ENCODE measurements at regions of chr12 and their contacts with region 1.

Region 1: DNA sequence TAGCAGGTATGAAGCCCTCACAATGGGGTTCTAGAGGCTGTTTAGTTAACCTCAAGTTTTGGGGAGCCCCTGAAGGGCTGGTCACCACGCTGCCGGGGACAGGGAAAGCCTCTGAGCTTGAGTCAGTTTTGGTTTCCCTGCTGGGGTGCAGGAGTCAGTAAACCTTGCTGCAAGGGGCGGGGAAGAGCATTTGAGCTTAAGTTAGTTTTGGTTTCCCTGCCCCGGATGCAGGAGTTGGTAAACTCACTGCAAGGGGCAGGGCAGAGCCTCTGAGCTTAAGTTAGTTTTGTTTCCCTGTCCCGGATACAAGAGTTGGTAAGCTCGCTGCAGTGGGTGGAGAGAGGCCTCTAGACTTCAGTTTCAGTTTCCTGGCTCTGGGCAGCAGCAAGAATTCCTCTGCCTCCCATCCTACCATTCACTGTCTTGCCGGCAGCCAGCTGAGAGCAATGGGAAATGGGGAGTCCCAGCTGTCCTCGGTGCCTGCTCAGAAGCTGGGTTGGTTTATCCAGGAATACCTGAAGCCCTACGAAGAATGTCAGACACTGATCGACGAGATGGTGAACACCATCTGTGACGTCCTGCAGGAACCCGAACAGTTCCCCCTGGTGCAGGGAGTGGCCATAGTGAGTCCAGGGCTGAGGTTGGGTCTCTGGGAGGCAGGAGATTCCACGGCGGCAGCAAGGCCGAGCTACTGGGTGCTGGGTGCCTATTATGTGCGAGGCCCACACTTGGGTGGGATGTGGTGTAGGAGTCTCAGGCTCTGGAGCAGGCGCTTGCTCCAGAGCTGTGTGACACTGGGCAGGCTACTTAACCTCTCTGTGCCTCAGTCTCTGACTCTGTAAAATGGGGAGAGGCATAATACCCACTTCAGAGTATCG is at the start of gene OAS2:
- DNase-seq: peak; percentile 93
- H3K4me3 ChIP-seq: peak within 1 kb of the TSS; percentile 81
- H3K27ac ChIP-seq: peak within 1 kb of the TSS; percentile 90
- H3K4me1 ChIP-seq: peaks cover 41% of the 10 kb centered on the region
- CTCF ChIP-seq: no peak
- total RNA-seq, gene OAS2: 22.7 and 33.2 TPM in 2 replicates

Region 2: DNA sequence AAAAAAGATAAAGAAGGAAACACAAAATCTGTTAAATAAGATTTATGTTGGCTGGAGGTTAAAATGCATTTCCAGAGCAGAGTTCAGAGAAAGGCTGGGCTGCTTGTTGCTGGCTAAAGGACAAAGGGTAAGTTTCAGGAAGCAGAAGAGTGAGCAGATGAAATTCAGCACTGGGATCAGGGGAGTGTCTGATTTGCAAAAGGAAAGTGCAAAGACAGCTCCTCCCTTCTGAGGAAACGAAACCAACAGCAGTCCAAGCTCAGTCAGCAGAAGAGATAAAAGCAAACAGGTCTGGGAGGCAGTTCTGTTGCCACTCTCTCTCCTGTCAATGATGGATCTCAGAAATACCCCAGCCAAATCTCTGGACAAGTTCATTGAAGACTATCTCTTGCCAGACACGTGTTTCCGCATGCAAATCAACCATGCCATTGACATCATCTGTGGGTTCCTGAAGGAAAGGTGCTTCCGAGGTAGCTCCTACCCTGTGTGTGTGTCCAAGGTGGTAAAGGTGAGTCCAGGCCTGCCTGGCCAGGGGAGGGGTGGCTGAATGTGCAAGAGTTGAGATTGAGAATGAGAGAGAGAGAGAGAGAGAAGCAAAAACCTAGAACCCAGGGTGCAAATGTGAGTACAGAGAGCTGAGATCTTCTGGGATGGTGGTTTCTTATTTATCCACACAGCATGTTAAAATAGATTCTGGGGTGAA is 71.5 kb before region 1 on chr12 and contains the start of gene OAS1:
- CTCF ChIA-PET with region 1: interaction called, 9 read pairs
- POLR2A ChIA-PET with region 1: interaction called, 35 read pairs
- intact Hi-C with region 1: loop called (anchors 1 kb)
- DNase-seq: peak; percentile 80
- H3K4me3 ChIP-seq: peak within 1 kb of the TSS; percentile 71
- H3K27ac ChIP-seq: peak within 1 kb of the TSS; percentile 85
- H3K4me1 ChIP-seq: peaks cover 66% of the 10 kb centered on the region
- CTCF ChIP-seq: no peak
- total RNA-seq, gene OAS1: 40.3 and 49.6 TPM in 2 replicates

Region 3: DNA sequence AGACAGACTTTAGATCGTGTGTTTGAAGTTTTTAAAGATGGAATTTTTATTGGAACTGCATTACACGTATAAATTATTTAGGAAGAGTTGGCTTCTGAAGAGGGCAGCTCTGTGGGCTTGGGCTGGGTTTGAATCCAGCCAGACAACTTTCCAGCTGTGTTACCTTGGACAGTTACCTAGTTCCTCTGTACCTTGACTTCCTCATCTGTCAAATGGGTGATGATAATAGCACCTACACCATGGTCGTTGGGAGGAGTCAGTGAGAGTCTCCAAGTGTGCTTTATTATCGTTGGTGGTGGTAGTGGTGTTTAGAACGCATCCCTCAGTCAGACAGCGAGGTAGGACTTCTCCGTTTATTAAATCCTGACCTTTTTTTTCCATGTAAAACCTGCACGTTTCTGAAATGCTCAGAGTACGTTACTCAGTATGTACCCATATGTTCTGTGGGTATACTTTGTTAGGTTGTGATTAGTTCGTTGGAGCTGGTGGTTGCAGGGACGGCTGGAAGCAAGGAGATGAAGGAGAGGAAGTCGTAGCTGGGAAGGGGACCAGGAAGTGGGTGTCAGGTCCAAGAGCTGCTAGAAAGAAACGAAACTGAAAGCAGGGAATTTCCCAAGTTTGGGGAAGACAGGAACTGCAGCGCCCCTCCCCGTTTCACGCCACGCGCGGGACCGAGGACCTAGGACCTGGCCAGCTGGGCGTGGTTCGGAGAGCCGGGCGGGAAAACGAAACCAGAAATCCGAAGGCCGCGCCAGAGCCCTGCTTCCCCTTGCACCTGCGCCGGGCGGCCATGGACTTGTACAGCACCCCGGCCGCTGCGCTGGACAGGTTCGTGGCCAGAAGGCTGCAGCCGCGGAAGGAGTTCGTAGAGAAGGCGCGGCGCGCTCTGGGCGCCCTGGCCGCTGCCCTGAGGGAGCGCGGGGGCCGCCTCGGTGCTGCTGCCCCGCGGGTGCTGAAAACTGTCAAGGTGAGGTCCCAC is 40.4 kb before region 1 on chr12 and contains the start of gene OAS3:
- CTCF ChIA-PET with region 1: no interaction called
- POLR2A ChIA-PET with region 1: interaction called, 4 read pairs
- intact Hi-C with region 1: loop called (anchors 2 kb)
- DNase-seq: peak; percentile 49
- H3K4me3 ChIP-seq: peak within 1 kb of the TSS; percentile 71
- H3K27ac ChIP-seq: peak within 1 kb of the TSS; percentile 66
- H3K4me1 ChIP-seq: peaks cover 31% of the 10 kb centered on the region
- CTCF ChIP-seq: no peak
- total RNA-seq, gene OAS3: 0.79 and 4.7 TPM in 2 replicates

Region 4: DNA sequence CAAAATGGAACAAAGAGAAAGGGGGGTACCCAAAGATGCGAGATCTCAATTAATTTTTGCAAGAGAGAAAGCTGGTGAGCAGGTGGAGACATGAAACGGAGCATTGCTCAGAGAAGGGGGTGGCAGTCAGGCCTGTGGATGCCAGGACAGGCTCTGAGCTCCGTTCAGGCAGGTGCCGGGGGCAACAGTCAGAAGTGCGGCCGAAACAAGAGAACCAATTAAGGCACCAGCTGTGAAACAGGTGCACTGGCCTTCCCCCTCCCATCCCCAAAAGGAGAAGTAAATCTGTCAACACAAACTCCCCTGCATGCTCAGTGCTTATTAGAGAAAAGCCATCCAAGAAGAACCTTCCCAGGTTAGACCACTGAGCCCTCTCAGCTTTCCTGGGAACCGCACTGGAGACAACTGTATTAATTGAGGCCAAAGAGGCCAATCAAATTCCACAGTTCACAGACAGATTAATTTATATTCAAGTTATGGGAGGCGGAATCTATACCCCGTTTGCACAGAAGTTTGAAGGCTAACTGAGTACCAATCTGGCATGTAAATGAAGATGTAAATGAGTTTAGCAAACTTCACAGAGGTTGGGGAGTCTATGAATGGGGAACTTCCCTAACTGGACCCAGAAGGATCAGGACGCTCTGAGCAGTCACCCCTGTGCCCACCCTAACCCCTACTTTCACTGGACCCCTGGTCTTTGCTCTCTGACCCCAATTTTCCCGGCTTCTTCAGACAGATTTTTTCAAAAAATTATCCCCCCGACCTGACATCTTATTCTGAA is 20.8 kb after region 1 on chr12:
- CTCF ChIA-PET with region 1: interaction called, 3 read pairs
- POLR2A ChIA-PET with region 1: interaction called, 14 read pairs
- intact Hi-C with region 1: loop called (anchors 1 kb)
- DNase-seq: peak; percentile 98
- H3K4me3 ChIP-seq: peak overlapping the region; percentile 41
- H3K27ac ChIP-seq: peak overlapping the region; percentile 99
- H3K4me1 ChIP-seq: peaks cover 45% of the 10 kb centered on the region
- CTCF ChIP-seq: no peak

Measured in OCI-LY7 (cell line).